SK-N-SH (cell line): ENCODE measurements at regions of chr11 and their contacts with region 1.

Region 1: GRCh38 chr11:33970984-33971466 is 79.1 kb upstream of the LMO2 start:
- DNase-seq: peak; percentile 66
- H3K4me3 ChIP-seq: no peak overlapping the region
- H3K27ac ChIP-seq: no peak overlapping the region
- H3K4me1 ChIP-seq: peaks cover 0 to 7% of the 10 kb centered on the region in 2 experiments; a peak in 1 of 4 replicates
- H3K27me3 ChIP-seq: peaks cover 14% of the 10 kb centered on the region; the same call in 1 of the 2 replicates
- CTCF ChIP-seq: peak; percentile 66
- EP300 ChIP-seq: no peak
- RAD21 ChIP-seq: peak; percentile 89

Region 2: GRCh38 chr11:33772300-33772699 is 198.7 kb before region 1 on chr11:
- CTCF ChIA-PET with region 1: no interaction called
- POLR2A ChIA-PET with region 1: no interaction called
- DNase-seq: no peak
- H3K4me3 ChIP-seq: no peak overlapping the region
- H3K27ac ChIP-seq: no peak overlapping the region
- H3K4me1 ChIP-seq: peaks cover 15 to 24% of the 10 kb centered on the region in 2 experiments; a peak in 3 of 4 replicates
- H3K27me3 ChIP-seq: no peaks in the 10 kb centered on the region
- CTCF ChIP-seq: no peak
- EP300 ChIP-seq: no peak
- RAD21 ChIP-seq: no peak

Region 3: DNA sequence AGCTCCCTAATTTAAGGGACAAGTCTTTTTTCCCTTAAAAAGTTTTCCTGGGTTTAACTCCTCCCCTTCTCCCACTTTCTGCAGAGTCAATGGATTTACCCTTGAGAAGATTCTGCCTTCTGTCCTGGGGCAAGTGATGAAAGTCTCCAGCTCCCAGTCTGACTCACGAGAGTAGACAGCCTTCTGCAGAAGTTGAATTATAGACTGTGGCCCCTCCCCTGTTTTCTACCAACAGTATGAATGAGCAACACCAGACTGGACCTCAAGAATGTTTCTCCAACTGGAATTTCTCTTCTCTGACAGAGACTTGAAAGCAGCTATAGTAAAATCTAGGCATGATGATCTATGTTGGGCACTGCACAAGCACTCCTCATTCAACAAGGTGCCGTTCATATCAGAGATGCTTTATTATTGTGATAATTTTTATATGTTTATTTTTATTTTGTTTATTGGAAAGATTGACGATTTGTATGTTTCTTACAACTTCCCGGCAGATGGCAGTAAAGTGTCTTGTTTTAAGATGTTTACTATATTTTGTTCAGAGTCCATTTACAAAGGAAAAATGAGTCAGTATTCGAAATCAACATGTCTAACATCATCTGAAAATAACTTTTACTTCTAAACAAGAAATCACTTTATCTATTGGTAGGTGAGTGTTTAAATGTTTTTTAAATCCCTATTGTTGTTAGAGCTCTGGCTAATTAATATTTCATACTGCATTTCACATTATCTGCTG is 135.7 kb before region 1 on chr11:
- CTCF ChIA-PET with region 1: interaction called, 40 read pairs
- POLR2A ChIA-PET with region 1: no interaction called
- DNase-seq: peak; percentile 39
- H3K4me3 ChIP-seq: no peak overlapping the region; a peak in 1 of 4 replicates
- H3K27ac ChIP-seq: no peak overlapping the region
- H3K4me1 ChIP-seq: peaks cover 0 to 23% of the 10 kb centered on the region in 2 experiments; a peak in 2 of 4 replicates
- H3K27me3 ChIP-seq: peaks cover 17% of the 10 kb centered on the region; the same call in 1 of the 2 replicates
- CTCF ChIP-seq: peak; percentile 60
- EP300 ChIP-seq: no peak
- RAD21 ChIP-seq: peak; percentile 70

Region 4: GRCh38 chr11:33842236-33842915 is 128.6 kb before region 1 on chr11:
- CTCF ChIA-PET with region 1: interaction called, 12 read pairs
- POLR2A ChIA-PET with region 1: no interaction called
- DNase-seq: peak; percentile 53
- H3K4me3 ChIP-seq: peak overlapping the region in 1 of 2 experiments; percentile 35; a peak in 2 of 4 replicates
- H3K27ac ChIP-seq: peak overlapping the region in 1 of 2 experiments; percentile 47; a peak in 2 of 4 replicates
- H3K4me1 ChIP-seq: peaks cover 7 to 9% of the 10 kb centered on the region in 2 experiments; a peak in 3 of 4 replicates
- H3K27me3 ChIP-seq: peaks cover 39% of the 10 kb centered on the region
- CTCF ChIP-seq: no peak
- EP300 ChIP-seq: no peak
- RAD21 ChIP-seq: no peak

Region 5: GRCh38 chr11:33863418-33864172 is 107.4 kb before region 1 on chr11:
- CTCF ChIA-PET with region 1: interaction called, 61 read pairs
- POLR2A ChIA-PET with region 1: no interaction called
- DNase-seq: no peak
- H3K4me3 ChIP-seq: no peak overlapping the region
- H3K27ac ChIP-seq: no peak overlapping the region
- H3K4me1 ChIP-seq: no peaks in the 10 kb centered on the region; a peak in 2 of 4 replicates
- H3K27me3 ChIP-seq: peaks cover 72% of the 10 kb centered on the region
- CTCF ChIP-seq: no peak
- EP300 ChIP-seq: no peak
- RAD21 ChIP-seq: no peak

Region 6: GRCh38 chr11:33946930-33947329 is 24.1 kb before region 1 on chr11:
- CTCF ChIA-PET with region 1: no interaction called
- POLR2A ChIA-PET with region 1: no interaction called
- DNase-seq: no peak
- H3K4me3 ChIP-seq: no peak overlapping the region
- H3K27ac ChIP-seq: no peak overlapping the region
- H3K4me1 ChIP-seq: peaks cover under 1 to 1% of the 10 kb centered on the region in 2 experiments; a peak in 2 of 4 replicates
- H3K27me3 ChIP-seq: no peaks in the 10 kb centered on the region; the same call in 1 of the 2 replicates
- CTCF ChIP-seq: no peak
- EP300 ChIP-seq: no peak
- RAD21 ChIP-seq: no peak